ENCODE measurements at regions of chr17 and their contacts with region 1.

Region 1: DNA sequence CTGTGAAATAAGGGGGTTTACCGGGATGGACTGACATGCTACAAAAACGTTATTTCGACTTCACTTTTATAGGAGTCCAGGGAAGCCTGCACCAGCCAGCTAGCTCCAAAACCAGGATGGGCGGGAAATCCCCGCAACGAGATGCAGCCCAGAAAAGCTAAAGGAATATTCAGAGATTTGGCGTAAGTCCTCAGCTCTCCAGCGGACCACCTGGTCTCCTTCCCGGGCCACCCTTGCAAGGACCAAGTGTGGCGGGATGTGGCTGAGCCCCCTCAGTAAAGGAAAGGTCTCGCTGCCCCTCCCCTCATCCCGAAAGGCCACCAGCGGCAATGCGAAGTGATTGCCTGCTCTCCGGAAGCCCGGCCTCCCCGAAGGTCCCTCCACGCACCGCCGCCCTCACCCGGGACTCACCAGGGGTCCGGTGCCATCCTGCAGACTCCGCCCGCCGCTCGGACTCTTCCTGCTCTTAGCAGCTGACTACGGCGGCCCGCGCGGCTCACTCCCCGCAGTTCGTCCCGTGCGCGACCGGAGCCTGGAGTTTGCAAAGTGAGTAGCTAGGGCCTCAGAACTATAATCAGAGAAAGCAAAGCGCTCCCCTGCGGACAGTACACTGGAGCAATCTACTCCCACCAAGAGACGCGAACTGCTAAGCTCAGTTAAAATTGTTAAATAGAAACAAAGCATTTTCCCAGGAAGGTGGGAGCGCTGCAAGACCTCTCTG is at the start of gene STX8:
- DNase-seq: peak; percentile 85
- H3K4me3 Mint-ChIP-seq: peak within 1 kb of the TSS; percentile 100
- H3K27ac Mint-ChIP-seq: peak within 1 kb of the TSS; percentile 88
- H3K4me1 Mint-ChIP-seq: peaks cover 14% of the 10 kb centered on the region
- H3K27me3 Mint-ChIP-seq: no peaks in the 10 kb centered on the region
- CTCF ChIP-seq: no peak
- total RNA-seq, gene STX8: 31.6 and 32.4 TPM in 2 replicates

Region 2: DNA sequence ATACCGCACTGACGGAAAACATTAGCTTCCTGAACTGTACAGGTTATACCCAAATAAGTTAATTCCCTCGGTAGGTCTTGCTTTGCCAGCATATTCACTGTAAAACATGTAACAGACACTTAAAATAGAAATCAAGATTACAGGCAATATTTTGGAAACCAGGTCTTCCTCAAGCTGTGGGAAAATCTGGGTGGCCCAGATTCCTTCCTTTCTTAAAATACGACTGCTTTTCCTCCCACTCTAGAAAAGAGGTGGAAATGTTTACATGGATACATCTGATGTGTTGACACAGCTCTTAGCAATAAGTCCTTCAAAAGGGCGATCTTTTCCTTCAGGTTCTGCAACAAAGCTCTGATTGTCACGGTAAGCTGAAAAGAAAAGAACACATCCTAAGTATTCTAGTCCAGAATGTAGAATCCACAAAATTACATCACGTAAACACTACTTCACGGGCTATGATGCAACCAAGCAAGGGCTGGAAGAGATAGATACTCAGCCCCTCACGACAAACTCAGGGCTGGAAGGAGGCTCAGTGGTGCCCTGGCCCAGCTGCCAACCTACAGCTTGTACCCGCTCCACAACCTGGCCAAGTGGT is 18.3 kb before region 1 on chr17:
- CTCF ChIA-PET with region 1: no interaction called
- intact Hi-C with region 1: no loop called
- DNase-seq: no peak
- H3K4me3 Mint-ChIP-seq: no peak overlapping the region
- H3K27ac Mint-ChIP-seq: no peak overlapping the region
- H3K4me1 Mint-ChIP-seq: no peaks in the 10 kb centered on the region
- H3K27me3 Mint-ChIP-seq: no peaks in the 10 kb centered on the region
- CTCF ChIP-seq: no peak

Region 3: GRCh38 chr17:9594065-9594464 is 18.5 kb after region 1 on chr17:
- CTCF ChIA-PET with region 1: no interaction called
- intact Hi-C with region 1: no loop called
- DNase-seq: no peak
- H3K4me3 Mint-ChIP-seq: no peak overlapping the region
- H3K27ac Mint-ChIP-seq: no peak overlapping the region
- H3K4me1 Mint-ChIP-seq: no peaks in the 10 kb centered on the region
- H3K27me3 Mint-ChIP-seq: peaks cover 13% of the 10 kb centered on the region
- CTCF ChIP-seq: no peak

Region 4: GRCh38 chr17:9644910-9645751 is 69.6 kb after region 1 on chr17 and contains the start of gene USP43:
- CTCF ChIA-PET with region 1: interaction called, 4 read pairs
- intact Hi-C with region 1: loop called (anchors 5 kb)
- DNase-seq: peak; percentile 78
- H3K4me3 Mint-ChIP-seq: peak within 1 kb of the TSS; percentile 93
- H3K27ac Mint-ChIP-seq: peak within 1 kb of the TSS; percentile 91
- H3K4me1 Mint-ChIP-seq: peaks cover 11% of the 10 kb centered on the region
- H3K27me3 Mint-ChIP-seq: no peaks in the 10 kb centered on the region
- CTCF ChIP-seq: no peak
- total RNA-seq, gene USP43: 6.7 and 8.5 TPM in 2 replicates

Region 5: GRCh38 chr17:9729034-9729650 is 153.6 kb after region 1 on chr17:
- CTCF ChIA-PET with region 1: no interaction called
- intact Hi-C with region 1: no loop called
- DNase-seq: peak; percentile 13
- H3K4me3 Mint-ChIP-seq: no peak overlapping the region
- H3K27ac Mint-ChIP-seq: no peak overlapping the region
- H3K4me1 Mint-ChIP-seq: no peaks in the 10 kb centered on the region
- H3K27me3 Mint-ChIP-seq: no peaks in the 10 kb centered on the region
- CTCF ChIP-seq: peak; percentile 51

Region 6: DNA sequence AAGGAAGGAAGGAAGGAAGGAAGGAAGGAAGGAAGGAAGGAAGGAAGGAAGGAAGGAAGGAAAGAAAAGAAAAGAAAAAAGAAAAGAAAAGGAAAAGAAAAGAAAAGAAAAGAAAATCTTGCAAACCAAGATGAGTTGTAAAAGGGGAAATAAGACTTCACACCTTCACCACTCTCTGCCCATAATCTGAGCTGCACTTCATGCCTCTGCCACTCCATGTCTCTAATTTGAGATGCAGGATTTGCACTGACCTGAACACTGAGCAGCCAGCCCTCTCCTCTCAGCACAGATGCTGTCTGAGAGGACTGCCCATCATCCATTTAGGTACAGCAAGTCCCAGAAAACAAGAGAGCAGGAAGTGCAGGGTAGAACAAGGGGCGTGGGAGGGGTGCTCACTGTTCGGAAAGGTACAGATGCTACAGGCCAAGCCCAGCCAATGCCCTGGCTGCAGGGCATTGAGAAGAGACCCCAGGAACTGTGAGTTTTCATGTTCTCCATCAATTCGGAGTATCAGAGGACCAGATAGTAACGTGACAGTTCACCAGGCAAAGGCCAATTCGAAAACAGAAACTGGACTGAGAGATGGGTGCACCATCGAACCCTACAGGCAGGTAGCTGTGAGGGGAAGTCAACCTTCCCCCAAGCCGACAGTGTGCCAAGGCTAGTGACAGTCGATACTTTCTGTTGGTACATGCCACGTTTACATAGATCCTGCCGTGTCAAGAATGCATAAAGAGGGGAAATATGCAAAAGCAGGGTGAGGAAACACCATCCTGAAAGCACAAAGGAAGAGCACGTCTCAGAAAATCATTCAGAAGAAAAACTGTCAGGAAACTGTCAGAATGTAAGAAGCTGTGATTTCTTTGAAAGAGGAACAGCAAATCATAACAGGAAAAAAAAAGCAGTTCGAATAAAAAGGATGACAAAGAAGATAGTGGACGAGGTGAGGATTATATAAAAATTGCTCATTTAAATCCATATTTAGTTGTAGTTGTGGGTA is 471.5 kb after region 1 on chr17:
- CTCF ChIA-PET with region 1: no interaction called
- intact Hi-C with region 1: no loop called
- DNase-seq: no peak
- H3K4me3 Mint-ChIP-seq: no peak overlapping the region
- H3K27ac Mint-ChIP-seq: no peak overlapping the region
- H3K4me1 Mint-ChIP-seq: no peaks in the 10 kb centered on the region
- H3K27me3 Mint-ChIP-seq: no peaks in the 10 kb centered on the region
- CTCF ChIP-seq: no peak